Activated CD8-positive, alpha-beta memory T cell treated with anti-CD3 and anti-CD28 coated beads, Interleukin-2, amount 10 ng/mL, durations not matched to agents 7 days and 5 days (primary cell): ENCODE measurements at regions of chr4 and their contacts with region 1.

Region 1: DNA sequence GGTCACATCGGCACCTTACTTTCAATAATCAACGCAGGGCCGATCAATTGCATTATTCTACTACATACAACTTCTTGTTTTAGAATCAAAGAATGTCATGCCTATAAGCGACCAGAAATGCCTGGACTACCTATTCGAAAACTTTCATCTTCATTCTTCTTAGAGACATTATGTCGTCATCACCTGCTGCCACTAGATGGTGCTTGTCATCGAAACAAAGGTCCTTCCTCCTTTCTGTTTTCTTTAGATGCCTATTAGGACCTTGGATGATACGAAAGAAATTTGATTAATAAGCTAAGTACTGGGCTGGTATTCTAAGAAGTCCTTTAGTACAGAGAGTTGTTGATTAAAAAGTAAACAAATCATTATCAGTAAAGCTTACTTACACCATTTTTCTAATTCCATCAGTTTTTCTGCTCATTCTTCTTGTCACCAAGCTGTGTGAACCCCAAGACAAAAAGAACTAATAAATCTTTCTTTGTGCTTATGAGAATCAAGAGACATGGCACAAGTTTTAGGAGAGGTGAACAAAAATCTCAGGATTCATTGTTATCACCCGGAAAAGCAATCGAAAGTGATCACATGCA is 154.5 kb upstream of the SLC4A4 start:
- DNase-seq: peak; percentile 61
- ATAC-seq: no peak
- H3K4me3 Mint-ChIP-seq: no peak overlapping the region
- H3K27ac Mint-ChIP-seq: no peak overlapping the region
- H3K4me1 Mint-ChIP-seq: peaks cover 25% of the 10 kb centered on the region
- H3K27me3 Mint-ChIP-seq: peaks cover 35% of the 10 kb centered on the region

Region 2: DNA sequence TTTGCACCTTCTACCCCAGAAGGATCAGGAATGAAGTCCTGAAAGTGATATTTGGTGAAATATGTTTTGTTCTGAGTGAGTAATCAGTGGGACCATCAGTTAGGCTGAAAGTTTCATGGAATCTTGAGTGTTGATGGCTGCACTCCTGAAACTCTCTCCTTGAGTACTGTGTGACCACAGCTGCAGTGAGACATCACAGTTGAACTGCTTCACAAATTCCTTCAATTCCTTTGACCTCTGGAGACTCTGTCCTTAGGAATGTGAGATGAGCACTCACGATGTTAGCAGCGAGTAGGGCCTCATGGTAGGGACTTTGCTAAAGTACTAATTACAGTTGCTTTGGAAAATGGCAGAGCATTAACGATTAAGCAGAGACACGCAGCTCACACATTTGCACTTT is 11.6 kb after region 1 on chr4:
- CTCF ChIA-PET with region 1: interaction called, 11 read pairs
- DNase-seq: no peak
- ATAC-seq: no peak
- H3K4me3 Mint-ChIP-seq: no peak overlapping the region
- H3K27ac Mint-ChIP-seq: no peak overlapping the region
- H3K4me1 Mint-ChIP-seq: peaks cover 13% of the 10 kb centered on the region
- H3K27me3 Mint-ChIP-seq: peaks cover 4% of the 10 kb centered on the region